Activated CD4-positive, alpha-beta T cell treated with anti-CD3 and anti-CD28 coated beads, Interleukin-2, amount 10 ng/mL, durations not matched to agents 24 days and 14 days (primary cell): ENCODE measurements at regions of chr7 and their contacts with region 1.

Region 1: GRCh38 chr7:73851410-73852234 is 9.3 kb upstream of the METTL27 start:
- DNase-seq: peak; percentile 75
- H3K4me3 Mint-ChIP-seq: peak overlapping the region; percentile 14
- H3K27ac Mint-ChIP-seq: peak overlapping the region; percentile 64
- H3K4me1 Mint-ChIP-seq: peaks cover 24% of the 10 kb centered on the region
- H3K27me3 Mint-ChIP-seq: peaks cover 26% of the 10 kb centered on the region

Region 2: DNA sequence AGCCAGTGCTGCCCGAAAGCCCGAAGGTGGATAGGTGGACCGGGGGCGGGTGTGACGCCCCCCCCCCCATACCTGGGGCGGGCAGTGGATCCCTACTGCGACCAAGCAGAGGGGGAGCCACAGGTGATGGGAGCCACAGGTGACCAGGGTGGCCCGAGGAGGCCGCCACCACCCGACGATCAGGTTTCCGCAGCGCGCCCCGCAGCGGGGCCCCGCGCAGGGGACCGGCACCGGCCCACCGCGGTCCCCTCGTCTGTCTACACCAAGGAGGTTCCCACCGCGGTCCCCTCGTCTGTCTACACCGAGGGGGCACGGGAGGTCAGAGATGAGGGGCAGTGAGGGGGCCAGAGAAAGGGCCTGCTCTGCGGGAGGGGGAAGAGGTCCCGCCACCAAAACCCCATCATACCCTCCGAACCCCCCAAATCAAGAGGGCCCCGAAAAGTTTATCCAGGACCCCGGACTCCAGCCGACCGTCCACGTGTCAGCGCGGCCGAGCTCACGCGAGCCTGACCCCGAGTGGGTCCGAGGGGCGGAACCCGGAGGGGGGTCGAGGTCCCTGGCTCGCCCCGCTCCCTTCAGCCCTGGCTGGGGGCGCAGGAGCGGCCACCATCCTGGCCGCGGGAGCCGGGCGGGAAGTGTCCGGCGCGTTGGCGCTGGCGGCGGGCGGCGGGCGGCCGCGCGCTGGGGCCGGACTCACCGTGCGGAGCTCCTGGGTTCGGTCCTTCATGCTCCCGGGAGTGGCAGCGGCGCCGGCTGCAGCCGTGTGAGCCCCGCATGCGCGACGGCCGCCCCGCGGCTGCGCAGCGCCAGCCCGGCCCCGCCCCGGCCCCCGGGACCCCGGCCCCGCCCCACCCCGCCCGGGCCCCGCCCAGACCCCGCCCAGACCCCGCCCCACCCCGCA is 132.5 kb before region 1 on chr7 and contains the start of gene STX1A:
- intact Hi-C with region 1: loop called (anchors 5 kb)
- DNase-seq: peak; percentile 93
- H3K4me3 Mint-ChIP-seq: peak within 1 kb of the TSS; percentile 92
- H3K27ac Mint-ChIP-seq: peak within 1 kb of the TSS; percentile 91
- H3K4me1 Mint-ChIP-seq: peaks cover 33% of the 10 kb centered on the region
- H3K27me3 Mint-ChIP-seq: peaks cover 19% of the 10 kb centered on the region
- total RNA-seq, gene STX1A: 19.0 and 19.4 TPM in 2 replicates

Region 3: GRCh38 chr7:73811760-73812168 is 39.9 kb before region 1 on chr7:
- intact Hi-C with region 1: loop called (anchors 1 kb)
- DNase-seq: peak; percentile 86
- H3K4me3 Mint-ChIP-seq: no peak overlapping the region
- H3K27ac Mint-ChIP-seq: no peak overlapping the region
- H3K4me1 Mint-ChIP-seq: peaks cover 1% of the 10 kb centered on the region
- H3K27me3 Mint-ChIP-seq: peaks cover 5% of the 10 kb centered on the region

Region 4: DNA sequence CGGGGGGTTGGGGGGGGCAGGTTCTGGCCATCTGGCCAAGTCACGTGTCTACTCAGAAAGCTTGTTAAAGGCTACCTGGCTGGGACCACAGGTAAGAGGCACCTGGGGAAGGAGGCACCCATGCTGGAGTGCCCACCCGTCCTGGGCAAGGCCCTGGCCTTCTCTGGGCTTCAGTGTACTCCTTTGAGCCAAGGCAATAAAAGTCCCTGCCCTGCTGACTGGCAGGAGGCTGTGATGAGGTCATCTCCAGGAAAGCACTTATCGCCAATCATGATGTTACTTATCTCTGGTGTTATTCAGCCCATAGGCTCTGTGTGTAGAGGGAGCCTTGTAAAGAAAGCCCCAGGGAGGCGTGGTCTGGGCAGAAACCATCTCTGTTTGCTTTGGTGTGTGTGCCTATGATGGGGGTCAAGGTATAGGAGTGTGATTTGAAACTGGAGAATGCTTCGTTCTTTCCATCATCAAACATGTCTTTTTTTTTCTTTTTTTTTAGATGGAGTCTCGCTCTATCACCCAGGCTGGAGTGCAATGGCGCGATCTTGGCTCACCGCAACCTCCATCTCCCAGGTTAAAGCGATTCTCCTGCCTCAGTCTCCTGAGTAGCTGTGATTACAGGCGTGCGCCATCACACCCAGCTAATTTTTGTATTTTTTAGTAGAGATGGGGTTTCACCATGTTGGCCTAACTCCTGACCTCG is 23.4 kb before region 1 on chr7:
- intact Hi-C with region 1: loop called (anchors 1 kb)
- DNase-seq: no peak
- H3K4me3 Mint-ChIP-seq: no peak overlapping the region
- H3K27ac Mint-ChIP-seq: no peak overlapping the region
- H3K4me1 Mint-ChIP-seq: peaks cover 13% of the 10 kb centered on the region
- H3K27me3 Mint-ChIP-seq: peaks cover 15% of the 10 kb centered on the region

Region 5: DNA sequence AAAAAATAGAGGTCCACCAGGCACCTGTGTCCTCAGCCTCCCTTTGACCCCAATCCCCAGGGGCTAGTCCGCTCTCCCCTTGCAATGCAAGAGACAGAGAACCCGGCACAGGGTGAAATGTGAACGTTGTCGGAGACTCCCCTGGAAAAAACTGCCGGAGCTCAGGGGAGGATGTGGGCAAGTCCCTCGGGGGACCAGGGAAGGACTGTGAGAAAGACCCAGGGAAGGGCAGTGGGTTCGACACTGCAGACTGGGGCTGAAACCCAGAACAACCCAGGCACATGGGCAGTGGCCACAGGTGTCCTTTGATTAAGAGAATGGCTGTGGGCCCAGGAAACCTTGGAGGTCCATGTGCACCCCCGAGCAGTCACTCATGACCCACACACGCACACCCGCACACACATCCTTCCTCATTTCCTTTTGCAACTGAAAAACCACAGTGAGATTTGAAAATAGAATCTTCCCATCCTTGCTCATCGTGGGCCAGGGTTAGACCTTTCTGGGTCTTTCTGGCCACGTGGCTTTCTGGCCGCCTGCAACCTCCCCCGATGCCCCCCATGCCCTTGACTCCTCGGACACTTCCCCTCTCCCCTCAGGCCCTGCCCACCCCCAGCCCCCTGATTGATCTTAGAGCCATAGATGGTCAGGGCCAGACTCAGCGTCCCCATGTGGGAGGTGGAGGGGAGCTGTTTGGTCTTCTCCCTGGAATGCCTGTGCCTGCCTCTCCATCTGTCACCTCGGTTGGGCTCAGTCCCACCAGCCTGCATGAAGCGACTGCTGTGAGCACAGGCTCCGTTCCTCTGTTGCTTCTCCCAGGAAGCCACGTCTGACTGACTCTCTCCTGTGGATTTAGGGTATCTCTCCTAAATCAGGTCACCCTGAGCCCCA is 366.1 kb after region 1 on chr7:
- intact Hi-C with region 1: no loop called
- DNase-seq: peak; percentile 76
- H3K4me3 Mint-ChIP-seq: peak overlapping the region; percentile 55
- H3K27ac Mint-ChIP-seq: peak overlapping the region; percentile 86
- H3K4me1 Mint-ChIP-seq: peaks cover 23% of the 10 kb centered on the region
- H3K27me3 Mint-ChIP-seq: no peaks in the 10 kb centered on the region